ENCODE measurements at regions of chr3 and their contacts with region 1.

Region 1: DNA sequence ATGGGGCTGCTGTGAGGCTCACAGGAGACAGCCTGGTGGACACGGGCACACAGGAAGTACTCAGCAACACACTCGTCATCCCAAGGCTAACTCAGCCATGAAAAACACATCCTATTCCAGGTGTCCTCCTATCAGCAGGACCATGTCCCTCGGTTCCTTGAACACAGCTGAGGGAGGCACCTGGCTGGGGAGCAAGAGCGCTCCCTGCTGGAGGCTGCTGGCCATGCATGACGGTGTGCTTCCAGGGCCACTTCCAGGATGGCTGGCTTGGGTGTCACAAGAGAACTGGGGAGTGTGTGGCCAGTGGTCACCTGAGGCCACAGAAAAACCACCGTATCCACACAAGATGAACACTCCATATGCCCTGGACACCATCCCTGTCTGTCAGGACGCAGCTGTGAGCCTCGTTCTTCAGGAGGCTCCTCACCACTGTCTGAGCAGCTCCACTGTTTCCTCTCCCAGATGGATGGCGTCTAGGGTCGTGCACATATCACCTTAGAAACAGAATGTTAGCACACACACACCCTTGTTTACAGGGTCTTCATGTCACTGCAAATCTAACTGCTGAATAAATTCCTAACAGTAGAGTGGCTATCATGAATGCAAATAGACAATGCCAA is 31.0 kb downstream of the POC1A start:
- DNase-seq: peak; percentile 81
- H3K4me3 Mint-ChIP-seq: no peak overlapping the region
- H3K27ac Mint-ChIP-seq: no peak overlapping the region
- H3K4me1 Mint-ChIP-seq: peaks cover 25% of the 10 kb centered on the region
- H3K27me3 Mint-ChIP-seq: no peaks in the 10 kb centered on the region

Region 2: GRCh38 chr3:51257870-51258269 is 865.3 kb before region 1 on chr3:
- CTCF ChIA-PET with region 1: no interaction called
- DNase-seq: no peak
- H3K4me3 Mint-ChIP-seq: no peak overlapping the region
- H3K27ac Mint-ChIP-seq: no peak overlapping the region
- H3K4me1 Mint-ChIP-seq: no peaks in the 10 kb centered on the region
- H3K27me3 Mint-ChIP-seq: no peaks in the 10 kb centered on the region

Region 3: DNA sequence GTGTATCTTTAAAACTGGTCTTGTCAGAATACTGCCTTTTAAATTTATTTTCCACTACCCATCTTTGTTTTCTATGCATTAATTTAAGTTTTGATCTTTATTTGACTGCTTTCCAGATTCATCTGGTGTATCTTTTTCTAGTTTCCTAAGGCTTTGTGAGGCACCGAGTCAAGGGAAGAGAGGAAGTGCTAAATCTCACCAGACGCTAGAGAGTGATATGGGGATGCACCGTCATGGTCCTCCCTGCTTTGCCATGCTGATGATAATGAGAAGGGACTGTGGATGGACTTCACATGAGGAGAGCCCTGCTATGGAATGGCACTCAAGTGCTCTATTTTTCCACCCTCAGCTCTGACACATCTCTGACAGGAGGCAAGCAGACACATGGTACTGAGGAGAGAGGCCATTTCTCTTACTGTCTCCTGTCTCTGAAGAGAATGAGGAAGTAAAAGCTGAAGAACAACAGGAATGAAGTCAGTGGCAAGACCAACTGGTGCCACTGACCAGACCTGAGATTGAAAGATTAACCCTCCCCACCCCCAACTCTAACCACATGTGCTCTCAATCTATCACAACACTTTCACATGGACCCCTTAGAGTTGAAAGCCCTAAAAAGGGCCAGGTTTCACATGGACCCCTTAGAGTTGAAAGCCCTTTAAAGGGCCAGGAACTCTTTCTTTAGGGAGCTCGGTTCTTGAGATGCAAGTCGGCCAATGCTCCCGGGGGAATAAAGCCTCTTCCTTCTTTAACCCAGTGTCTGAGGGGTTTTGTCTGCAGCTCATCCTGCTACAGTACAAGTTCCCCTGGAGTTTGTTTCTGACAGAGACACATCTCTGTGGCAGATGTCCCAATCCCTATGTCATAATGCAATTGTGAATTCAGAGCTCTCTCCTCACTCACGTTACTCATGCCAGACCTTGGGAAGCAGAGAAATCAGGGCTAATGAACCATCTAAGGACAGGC is 262.2 kb before region 1 on chr3 and contains the start of gene IQCF2:
- CTCF ChIA-PET with region 1: no interaction called
- DNase-seq: no peak
- H3K4me3 Mint-ChIP-seq: no peak within 1 kb of the TSS
- H3K27ac Mint-ChIP-seq: no peak within 1 kb of the TSS
- H3K4me1 Mint-ChIP-seq: peaks cover 5% of the 10 kb centered on the region
- H3K27me3 Mint-ChIP-seq: peaks cover 17% of the 10 kb centered on the region

Region 4: DNA sequence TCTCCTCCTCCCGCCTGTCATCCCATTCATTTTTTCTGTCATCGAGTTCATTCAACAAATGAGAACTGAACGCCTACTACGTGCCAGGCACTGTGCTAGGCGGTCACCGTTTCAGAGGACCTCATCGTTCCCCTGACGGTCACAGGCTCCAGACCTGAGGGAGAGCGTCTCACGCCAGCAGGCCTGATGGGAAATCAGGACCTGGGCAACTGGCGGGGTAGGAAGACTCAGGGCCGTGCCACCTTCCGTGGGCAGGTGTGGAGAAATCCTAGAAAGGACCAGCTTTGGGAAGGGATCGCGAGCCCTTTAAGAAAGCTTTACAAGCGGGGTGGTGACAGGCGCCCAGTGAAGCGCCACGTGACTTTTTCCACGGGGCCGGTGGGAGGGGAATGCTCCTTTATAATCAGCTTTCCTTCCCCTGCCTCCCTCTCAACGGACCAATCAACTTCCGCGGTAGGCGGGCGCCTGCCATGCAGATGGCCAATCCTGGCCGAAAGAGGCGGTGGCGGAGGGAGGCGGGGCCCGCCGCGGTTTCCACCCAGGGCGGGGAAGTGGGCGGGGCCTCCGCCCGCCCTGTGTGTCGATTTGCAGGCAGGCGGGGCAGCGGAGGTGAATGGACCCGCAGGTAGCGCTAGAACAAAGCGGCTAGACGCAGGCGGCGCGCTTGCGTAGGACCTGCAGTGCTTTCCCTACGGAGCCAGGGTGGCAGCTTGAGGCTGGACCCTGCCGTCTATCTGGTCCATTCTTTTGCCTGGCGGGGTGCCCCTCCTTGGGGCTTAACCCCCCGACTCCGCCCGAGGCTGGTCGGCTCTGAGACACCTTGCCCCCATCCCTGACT is 66.0 kb before region 1 on chr3:
- CTCF ChIA-PET with region 1: interaction called, 40 read pairs
- DNase-seq: peak; percentile 100
- H3K4me3 Mint-ChIP-seq: peak overlapping the region; percentile 86
- H3K27ac Mint-ChIP-seq: peak overlapping the region; percentile 95
- H3K4me1 Mint-ChIP-seq: peaks cover 40% of the 10 kb centered on the region
- H3K27me3 Mint-ChIP-seq: peaks cover 9% of the 10 kb centered on the region

Region 5: GRCh38 chr3:52197842-52198668 is 74.8 kb after region 1 on chr3 and contains the start of gene ALAS1:
- CTCF ChIA-PET with region 1: no interaction called
- DNase-seq: peak; percentile 95
- H3K4me3 Mint-ChIP-seq: peak within 1 kb of the TSS; percentile 97
- H3K27ac Mint-ChIP-seq: peak within 1 kb of the TSS; percentile 88
- H3K4me1 Mint-ChIP-seq: peaks cover 52% of the 10 kb centered on the region
- H3K27me3 Mint-ChIP-seq: peaks cover 31% of the 10 kb centered on the region